ENCODE measurements at regions of chr3 and their contacts with region 1.

Region 1: GRCh38 chr3:44529927-44530326 is 25.1 kb upstream of the ZKSCAN7 start:
- DNase-seq: peak; percentile 42
- ATAC-seq: no peak
- H3K4me3 Mint-ChIP-seq: no peak overlapping the region
- H3K27ac Mint-ChIP-seq: no peak overlapping the region
- H3K4me1 Mint-ChIP-seq: no peaks in the 10 kb centered on the region
- H3K27me3 Mint-ChIP-seq: peaks cover 9% of the 10 kb centered on the region

Region 2: GRCh38 chr3:44568561-44568960 is 38.6 kb after region 1 on chr3:
- CTCF ChIA-PET with region 1: no interaction called
- DNase-seq: no peak
- ATAC-seq: no peak
- H3K4me3 Mint-ChIP-seq: no peak overlapping the region
- H3K27ac Mint-ChIP-seq: no peak overlapping the region
- H3K4me1 Mint-ChIP-seq: no peaks in the 10 kb centered on the region
- H3K27me3 Mint-ChIP-seq: no peaks in the 10 kb centered on the region

Region 3: GRCh38 chr3:44913868-44914468 is 384.0 kb after region 1 on chr3:
- CTCF ChIA-PET with region 1: interaction called, 22 read pairs
- DNase-seq: peak; percentile 68
- ATAC-seq: peak; percentile 79
- H3K4me3 Mint-ChIP-seq: no peak overlapping the region
- H3K27ac Mint-ChIP-seq: no peak overlapping the region
- H3K4me1 Mint-ChIP-seq: no peaks in the 10 kb centered on the region
- H3K27me3 Mint-ChIP-seq: peaks cover 15% of the 10 kb centered on the region